GM10248 (cell line): ENCODE measurements at regions of chr12 and their contacts with region 1.

Region 1: DNA sequence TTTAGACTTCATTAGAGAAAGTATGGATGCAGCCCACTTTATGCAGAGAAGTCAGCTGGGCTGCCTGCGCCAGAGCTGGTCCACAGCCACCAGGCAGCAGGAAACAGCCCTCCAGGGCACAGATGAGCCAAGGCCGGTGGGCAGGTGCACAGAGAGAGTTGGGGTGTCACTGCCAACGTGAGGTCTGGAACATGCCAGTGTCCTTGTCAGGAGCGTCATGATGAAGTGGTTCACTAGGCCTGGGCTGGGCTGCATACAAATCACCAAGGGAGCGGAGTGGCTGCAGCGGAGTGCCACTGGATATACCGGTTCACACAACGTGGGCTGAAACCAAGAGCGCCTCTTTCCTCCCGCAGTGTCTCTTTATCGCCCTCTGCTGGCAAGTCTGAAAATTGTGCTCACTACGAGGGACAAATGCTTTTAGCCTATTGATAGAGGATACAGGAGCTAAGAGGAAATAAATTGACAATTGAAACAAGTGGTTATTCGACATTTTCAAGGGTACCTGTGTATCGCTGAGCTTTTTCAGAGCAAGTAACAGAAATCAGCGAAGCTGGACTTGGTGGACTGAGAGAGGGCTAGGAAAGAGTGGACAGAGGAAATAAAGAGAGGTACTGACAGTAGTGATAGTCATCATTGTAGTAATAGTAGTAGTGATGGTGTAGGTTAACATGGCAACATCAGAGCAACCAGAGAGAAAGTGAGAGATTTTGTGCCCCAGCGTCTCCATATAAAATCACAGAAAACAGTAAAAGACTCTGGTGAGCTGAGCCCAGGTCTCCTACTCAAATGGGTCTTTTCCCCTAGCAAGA is 52.0 kb upstream of the ITPR2 start:
- DNase-seq: peak; percentile 81
- CTCF ChIP-seq: peak; percentile 88

Region 2: DNA sequence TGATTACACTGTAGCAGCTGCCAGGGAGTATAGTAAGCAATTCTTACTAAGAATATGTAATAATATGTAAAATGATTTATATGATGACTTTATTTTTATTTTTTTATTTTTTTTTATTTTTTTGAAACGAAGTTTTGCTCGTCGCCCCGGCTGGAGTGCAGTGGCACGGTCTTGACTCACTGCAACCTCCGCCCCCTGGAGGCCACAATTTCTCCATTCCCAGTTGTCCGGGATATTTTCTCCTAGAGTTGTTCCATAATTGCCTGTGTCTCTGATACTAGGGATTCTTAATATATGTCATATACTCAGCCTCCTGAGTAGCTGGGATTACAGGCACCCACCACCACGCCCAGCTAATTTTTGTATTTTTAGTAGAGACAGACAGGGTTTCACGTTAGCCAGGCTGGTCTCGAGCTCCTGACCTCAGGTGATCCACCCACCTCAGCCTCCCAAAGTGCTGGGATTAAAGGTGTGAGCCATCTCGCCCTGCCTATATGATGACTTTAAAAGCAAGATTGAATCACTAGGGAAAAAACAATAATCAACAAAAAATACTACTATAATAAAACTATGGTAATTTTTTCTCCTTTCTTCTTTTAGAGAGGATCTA is 39.8 kb before region 1 on chr12:
- CTCF ChIA-PET with region 1: interaction called, 54 read pairs
- POLR2A ChIA-PET with region 1: no interaction called
- DNase-seq: no peak
- CTCF ChIP-seq: peak; percentile 44

Region 3: DNA sequence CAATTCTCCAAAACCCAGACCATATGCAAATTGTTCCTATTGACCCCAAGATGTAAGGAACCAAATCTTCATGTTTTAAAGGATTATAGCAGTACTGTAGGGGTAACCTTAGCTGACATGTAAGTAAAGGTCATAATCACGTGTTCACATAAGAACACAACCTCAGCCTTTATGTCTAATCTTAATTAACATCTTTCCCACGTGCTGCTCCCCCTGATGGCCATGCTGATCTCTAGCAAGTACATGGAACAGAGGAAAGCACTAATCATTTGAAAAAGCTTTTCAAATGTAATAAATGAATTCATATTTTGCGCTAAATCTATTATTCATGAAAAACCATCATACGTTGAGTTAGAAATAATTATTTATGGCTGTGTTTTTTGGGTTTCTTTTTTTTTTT is 21.5 kb before region 1 on chr12:
- CTCF ChIA-PET with region 1: interaction called, 81 read pairs
- POLR2A ChIA-PET with region 1: no interaction called
- DNase-seq: no peak
- CTCF ChIP-seq: no peak

Region 4: DNA sequence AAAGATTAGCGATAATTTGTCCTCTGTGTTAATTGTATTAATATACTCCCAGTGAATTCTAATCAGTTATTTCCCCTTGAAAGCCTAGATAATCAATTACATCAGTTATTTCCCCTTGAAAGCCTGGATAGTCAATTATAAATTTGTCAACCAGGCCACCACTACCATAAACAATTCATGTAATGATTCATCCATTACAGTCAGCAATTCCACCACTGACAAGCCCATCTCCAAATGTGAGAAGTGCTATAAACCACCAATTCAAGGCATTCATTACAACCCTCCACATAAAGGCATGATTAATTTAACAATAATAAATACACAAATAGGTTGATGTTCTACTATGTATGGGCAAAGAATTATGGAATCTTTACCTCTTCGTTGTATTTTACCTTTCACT is 11.9 kb after region 1 on chr12:
- CTCF ChIA-PET with region 1: interaction called, 27 read pairs
- POLR2A ChIA-PET with region 1: no interaction called
- DNase-seq: no peak
- CTCF ChIP-seq: no peak